ENCODE measurements at regions of chr11 and their contacts with region 1.

Region 1: GRCh38 chr11:75689863-75690609 is 21.2 kb upstream of the MAP6 start:
- DNase-seq: peak in 3 of 42 donors; percentile 14 to 40 (median 36)

Region 2: DNA sequence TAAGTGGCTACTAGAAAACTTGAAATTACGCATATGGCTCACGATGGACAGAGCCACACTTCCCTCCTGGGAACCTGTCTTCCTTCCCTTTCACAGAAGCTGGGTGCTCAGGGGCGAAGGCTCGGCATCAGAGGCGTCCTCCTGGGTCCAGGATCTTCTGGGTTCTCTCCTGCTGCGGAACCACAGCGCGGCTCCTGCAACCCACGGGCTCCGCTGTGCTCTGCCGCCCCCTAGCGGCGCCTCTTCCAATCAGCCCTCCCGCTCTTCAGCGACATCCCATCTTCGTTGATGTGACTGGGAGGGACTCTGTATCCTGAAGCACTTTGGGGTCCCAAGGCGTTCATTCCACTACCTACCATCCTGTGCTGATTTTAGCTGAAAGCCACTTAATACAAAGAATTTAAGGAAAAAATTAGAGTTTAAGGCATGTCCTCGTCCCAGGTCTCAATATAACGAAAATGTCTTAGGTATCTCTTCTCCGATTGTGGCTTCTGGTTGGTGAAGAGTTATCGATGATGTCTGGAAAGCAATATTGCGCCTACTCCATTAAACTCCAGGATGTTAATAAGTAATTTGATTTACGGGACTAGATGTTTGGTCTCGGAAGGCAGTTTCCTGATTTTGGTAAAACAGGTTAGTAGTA is 305.5 kb before region 1 on chr11:
- intact Hi-C with region 1: no loop called
- DNase-seq: peak; percentile 70 to 94 (median 86)

Region 3: GRCh38 chr11:75773595-75774353 is 83.7 kb after region 1 on chr11:
- intact Hi-C with region 1: loop called (anchors 10 kb)
- DNase-seq: no peak